Dendritic cell treated with granulocyte-macrophage colony-stimulating factor and Interleukin-4, amounts not matched to agents 40 ng/mL and 50 ng/mL, for 4 days (primary cell): ENCODE measurements at regions of chr7 and their contacts with region 1.

Region 1: DNA sequence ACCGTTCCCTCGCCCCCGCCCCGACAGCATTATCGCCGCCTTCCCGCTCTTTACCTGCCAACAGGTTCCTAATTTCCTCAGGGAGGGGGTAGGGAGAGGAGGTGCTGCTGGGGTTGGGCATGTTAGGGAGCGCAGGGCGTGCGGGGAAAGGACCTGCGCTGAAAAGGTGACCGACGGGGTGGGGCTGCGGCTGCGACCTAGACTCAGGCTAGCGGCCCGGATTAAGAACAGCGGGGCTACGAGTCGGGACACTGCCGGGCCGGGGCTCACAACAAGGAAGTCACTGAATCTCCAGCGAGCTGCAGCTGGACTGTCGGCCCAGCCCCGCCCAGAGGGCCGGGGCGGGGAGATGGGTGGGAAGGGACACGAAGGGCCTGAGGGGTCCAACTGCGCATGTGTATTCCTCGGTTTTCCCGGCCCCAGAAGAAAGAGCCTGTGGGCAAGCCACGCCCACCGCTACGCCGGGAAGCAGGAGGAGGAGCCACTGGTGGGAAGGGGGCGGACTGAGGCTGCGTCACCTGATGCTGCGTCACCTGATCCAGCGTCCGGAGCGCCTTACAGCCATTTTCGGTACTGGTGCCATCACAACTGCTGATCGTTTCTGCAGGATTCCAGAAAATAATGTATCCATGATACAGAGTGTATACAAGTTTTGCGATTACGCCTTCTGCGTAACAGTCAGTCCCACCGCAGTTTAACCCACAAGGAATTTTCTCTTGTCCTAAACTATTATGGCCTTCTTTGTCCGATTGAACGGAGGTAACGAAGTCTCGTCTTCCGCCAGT is at the start of gene SKAP2:
- H3K4me3 Mint-ChIP-seq: peak within 1 kb of the TSS; percentile 100
- H3K27ac Mint-ChIP-seq: peak within 1 kb of the TSS; percentile 100
- H3K4me1 Mint-ChIP-seq: peaks cover 20% of the 10 kb centered on the region
- H3K27me3 Mint-ChIP-seq: no peaks in the 10 kb centered on the region

Region 2: DNA sequence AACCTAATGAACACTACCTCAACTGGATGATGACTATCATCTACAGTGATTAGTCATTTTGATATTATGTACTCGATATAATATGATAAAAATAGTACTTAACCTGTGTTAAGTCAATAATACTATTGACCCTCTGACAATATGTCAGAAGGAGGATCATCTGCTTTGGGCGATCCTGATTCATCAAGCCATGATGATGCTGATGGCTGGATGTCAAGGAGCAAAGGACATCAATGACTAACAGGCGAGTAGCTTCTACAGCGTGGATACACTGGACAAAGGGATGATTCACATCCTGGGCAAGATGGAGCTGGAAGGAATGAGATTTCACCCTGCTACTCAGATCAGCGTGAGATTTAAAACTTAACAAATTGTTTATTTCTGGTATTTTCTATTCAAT is 94.3 kb after region 1 on chr7:
- intact Hi-C with region 1: no loop called
- H3K4me3 Mint-ChIP-seq: no peak overlapping the region
- H3K27ac Mint-ChIP-seq: no peak overlapping the region
- H3K4me1 Mint-ChIP-seq: peaks cover 7% of the 10 kb centered on the region
- H3K27me3 Mint-ChIP-seq: peaks cover 1% of the 10 kb centered on the region

Region 3: DNA sequence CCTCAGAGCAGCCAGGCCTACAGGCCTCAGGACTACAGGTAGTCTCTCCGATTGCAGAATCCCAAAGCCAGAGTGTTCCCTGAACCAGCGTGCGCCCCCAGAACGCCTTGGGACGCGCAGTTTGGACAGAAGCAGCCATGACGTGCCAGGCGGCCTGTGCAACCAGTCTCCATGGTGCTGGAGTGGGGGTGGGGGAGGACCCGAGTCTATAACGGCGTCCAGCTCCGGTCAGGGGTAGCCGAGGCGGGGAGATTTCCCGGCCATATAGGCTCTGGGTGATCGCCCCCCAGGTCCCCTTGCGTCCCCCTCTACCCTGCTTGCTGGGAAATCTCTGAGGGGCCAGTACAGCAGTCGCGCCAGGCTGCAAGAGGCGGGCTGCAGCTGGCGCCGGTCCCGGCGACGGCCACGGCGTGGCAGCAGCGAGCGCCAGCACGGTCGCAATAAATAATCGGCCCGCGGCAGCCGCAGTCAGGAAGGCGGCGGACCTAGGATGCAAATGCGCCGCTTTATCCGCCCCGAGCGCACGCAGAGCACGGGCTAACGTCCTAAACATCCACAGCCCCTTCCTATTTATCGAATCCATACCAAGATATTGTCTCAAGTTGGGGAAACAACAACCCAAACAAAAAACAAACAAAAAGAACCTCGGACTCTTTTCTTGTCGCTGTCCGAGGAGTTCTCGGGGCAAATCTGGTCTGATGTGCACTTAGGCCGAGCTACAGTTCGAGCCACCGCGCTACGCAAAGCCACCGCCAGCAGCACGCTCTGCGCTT is 286.3 kb after region 1 on chr7:
- intact Hi-C with region 1: loop called (anchors 5 kb)
- H3K4me3 Mint-ChIP-seq: peak overlapping the region; percentile 70
- H3K27ac Mint-ChIP-seq: peak overlapping the region; percentile 7
- H3K4me1 Mint-ChIP-seq: peaks cover 58% of the 10 kb centered on the region
- H3K27me3 Mint-ChIP-seq: peaks cover 98% of the 10 kb centered on the region